ENCODE measurements at regions of chr11 and their contacts with region 1.

Region 1: GRCh38 chr11:74255741-74256369 is 55.6 kb downstream of the P4HA3 start:
- DNase-seq: peak; percentile 84
- H3K4me3 ChIP-seq: no peak overlapping the region
- H3K27ac ChIP-seq: no peak overlapping the region
- H3K4me1 ChIP-seq: peaks cover 0 to 24% (median 18%) of the 10 kb centered on the region in 4 donors
- H3K27me3 ChIP-seq: no peaks in the 10 kb centered on the region
- CTCF ChIP-seq: peak; percentile 92 to 94 (median 94)
- EP300 ChIP-seq: no peak
- POLR2A ChIP-seq: no peak

Region 2: GRCh38 chr11:74321487-74322188 is 65.8 kb after region 1 on chr11:
- intact Hi-C with region 1: loop called (anchors 2 kb)
- DNase-seq: no peak
- H3K4me3 ChIP-seq: no peak overlapping the region
- H3K27ac ChIP-seq: peak overlapping the region in 2 of 4 donors; percentile 19 to 40
- H3K4me1 ChIP-seq: peaks cover 24 to 59% (median 53%) of the 10 kb centered on the region in 4 donors
- H3K27me3 ChIP-seq: no peaks in the 10 kb centered on the region
- CTCF ChIP-seq: peak; percentile 48 to 65 (median 49)
- EP300 ChIP-seq: no peak
- POLR2A ChIP-seq: no peak

Region 3: DNA sequence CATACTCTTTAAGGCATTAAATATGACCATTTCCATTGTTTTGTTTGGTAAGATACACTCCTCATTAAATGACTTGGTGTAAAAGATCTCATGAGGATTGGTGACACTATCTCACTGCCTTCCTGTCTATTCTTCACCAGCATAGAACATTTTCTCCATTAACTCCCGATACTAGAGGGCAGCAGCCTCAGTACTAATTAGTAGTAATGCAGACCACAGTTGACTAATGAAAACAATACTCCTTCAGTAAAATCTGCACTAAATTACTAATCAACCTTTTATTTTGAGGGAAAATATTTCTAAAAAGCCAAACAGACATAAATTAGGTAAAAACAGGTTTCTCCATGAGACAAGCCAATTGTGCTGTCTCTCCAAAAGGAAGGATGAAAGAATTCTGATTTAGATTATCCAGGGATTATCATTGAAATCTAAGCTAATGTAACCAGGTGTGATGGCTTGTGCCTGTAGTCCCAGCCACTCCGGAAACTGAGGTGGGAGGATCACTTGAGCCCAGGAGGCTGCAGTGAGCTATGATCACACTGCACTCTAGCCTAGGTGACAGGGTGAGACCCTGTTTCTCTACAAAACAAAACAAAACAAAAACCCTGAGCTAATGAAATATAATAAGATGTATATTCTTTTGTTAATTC is 132.9 kb after region 1 on chr11:
- intact Hi-C with region 1: loop called (anchors 2 kb)
- DNase-seq: no peak
- H3K4me3 ChIP-seq: no peak overlapping the region
- H3K27ac ChIP-seq: no peak overlapping the region
- H3K4me1 ChIP-seq: peaks cover 0 to 7% (median 4%) of the 10 kb centered on the region in 4 donors
- H3K27me3 ChIP-seq: no peaks in the 10 kb centered on the region
- CTCF ChIP-seq: peak; percentile 68 to 76 (median 70)
- EP300 ChIP-seq: no peak
- POLR2A ChIP-seq: no peak

Region 4: DNA sequence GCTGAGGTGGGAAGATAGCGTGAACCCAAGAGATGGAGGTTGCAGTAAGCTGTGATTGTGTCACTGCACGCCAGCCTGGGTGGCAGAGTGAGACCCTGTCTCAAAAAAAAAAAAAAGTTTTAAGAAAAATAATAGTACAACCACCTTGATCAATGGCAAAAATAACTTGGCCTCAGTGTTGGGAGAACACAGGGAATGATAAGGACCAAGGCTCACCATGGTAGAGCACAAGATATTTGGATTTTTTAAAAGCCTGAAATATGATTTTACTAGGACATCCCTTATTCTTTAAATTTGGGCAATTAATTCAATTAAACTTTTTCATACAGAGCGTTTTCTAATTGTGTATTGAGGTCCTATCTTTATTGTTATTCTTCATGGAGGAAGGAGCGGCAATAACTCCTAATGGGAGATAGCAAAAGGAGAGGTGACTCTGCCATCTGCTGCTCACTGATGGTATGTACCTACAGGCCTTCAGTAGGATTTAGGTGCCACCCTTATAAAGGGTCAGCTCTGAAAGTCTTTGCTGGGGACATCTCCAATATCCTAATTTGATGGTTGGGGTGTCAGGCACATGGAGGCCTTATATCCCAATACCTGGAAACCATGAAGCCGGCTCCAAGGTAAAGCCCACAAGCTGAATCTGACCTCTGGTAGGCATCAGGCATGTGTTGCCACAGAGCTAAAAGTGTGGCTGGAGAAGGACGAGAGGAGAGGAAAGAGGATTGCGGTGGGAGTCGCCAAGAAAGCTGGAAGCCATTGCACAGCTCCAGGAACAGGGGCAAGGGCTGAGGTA is 314.6 kb after region 1 on chr11:
- intact Hi-C with region 1: loop called (anchors 10 kb)
- DNase-seq: no peak
- H3K4me3 ChIP-seq: no peak overlapping the region
- H3K27ac ChIP-seq: no peak overlapping the region
- H3K4me1 ChIP-seq: no peaks in the 10 kb centered on the region
- H3K27me3 ChIP-seq: peaks cover 0 to 3% (median 0%) of the 10 kb centered on the region in 4 donors
- CTCF ChIP-seq: peak; percentile 51 to 64 (median 54)
- EP300 ChIP-seq: no peak
- POLR2A ChIP-seq: no peak

Measured in esophagus muscularis mucosa (tissue), 4 donors.